Mammary epithelial cell (primary cell): ENCODE measurements at regions of chr10 and their contacts with region 1.

Region 1: GRCh38 chr10:113563306-113564088 is 10.6 kb downstream of the HABP2 start:
- DNase-seq: peak; percentile 48
- H3K4me3 ChIP-seq: peak overlapping the region; percentile 29 to 43 (median 41)
- H3K27ac ChIP-seq: no peak overlapping the region
- H3K4me1 ChIP-seq: peaks cover 3% of the 10 kb centered on the region
- H3K27me3 ChIP-seq: no peaks in the 10 kb centered on the region
- CTCF ChIP-seq: peak; percentile 98

Region 2: GRCh38 chr10:112981553-112981952 is 581.9 kb before region 1 on chr10:
- CTCF ChIA-PET with region 1: no interaction called
- dilution Hi-C with region 1: no loop called
- in situ Hi-C with region 1: no loop called
- intact Hi-C with region 1: loop called (anchors 2 kb)
- DNase-seq: no peak
- H3K4me3 ChIP-seq: no peak overlapping the region
- H3K27ac ChIP-seq: no peak overlapping the region
- H3K4me1 ChIP-seq: peaks cover 13% of the 10 kb centered on the region
- H3K27me3 ChIP-seq: no peaks in the 10 kb centered on the region
- CTCF ChIP-seq: no peak

Region 3: GRCh38 chr10:113216102-113216501 is 347.4 kb before region 1 on chr10:
- CTCF ChIA-PET with region 1: no interaction called
- dilution Hi-C with region 1: no loop called
- in situ Hi-C with region 1: no loop called
- intact Hi-C with region 1: loop called (anchors 2 kb)
- DNase-seq: peak; percentile 12
- H3K4me3 ChIP-seq: no peak overlapping the region
- H3K27ac ChIP-seq: no peak overlapping the region
- H3K4me1 ChIP-seq: no peaks in the 10 kb centered on the region
- H3K27me3 ChIP-seq: peaks cover 3% of the 10 kb centered on the region
- CTCF ChIP-seq: peak; percentile 33 to 62

Region 4: DNA sequence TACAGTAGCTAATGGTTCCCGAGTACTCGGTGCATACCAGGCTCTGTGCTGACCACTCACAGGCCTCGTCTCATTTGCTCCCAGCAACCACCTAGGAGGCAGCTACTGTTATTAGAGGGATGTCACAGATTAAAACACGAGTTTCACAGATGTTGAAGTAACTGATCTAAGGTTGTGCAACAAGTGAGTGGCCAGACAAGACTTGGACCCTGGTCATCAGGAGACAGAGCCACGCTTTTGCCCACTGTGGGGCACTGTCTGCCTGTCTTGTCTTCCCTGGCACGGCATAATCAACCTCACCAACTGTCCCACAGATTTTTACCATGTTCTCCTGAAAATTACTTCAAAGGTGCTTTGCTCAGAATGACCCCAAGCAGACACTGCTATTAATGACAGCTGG is 122.3 kb before region 1 on chr10:
- CTCF ChIA-PET with region 1: no interaction called
- dilution Hi-C with region 1: no loop called
- in situ Hi-C with region 1: no loop called
- intact Hi-C with region 1: loop called (anchors 1 kb)
- DNase-seq: no peak
- H3K4me3 ChIP-seq: no peak overlapping the region
- H3K27ac ChIP-seq: no peak overlapping the region
- H3K4me1 ChIP-seq: no peaks in the 10 kb centered on the region
- H3K27me3 ChIP-seq: peaks cover 3% of the 10 kb centered on the region
- CTCF ChIP-seq: peak; percentile 5 to 31